Psoas muscle (tissue), 8 donors: ENCODE measurements at regions of chr11 and their contacts with region 1.

Region 1: DNA sequence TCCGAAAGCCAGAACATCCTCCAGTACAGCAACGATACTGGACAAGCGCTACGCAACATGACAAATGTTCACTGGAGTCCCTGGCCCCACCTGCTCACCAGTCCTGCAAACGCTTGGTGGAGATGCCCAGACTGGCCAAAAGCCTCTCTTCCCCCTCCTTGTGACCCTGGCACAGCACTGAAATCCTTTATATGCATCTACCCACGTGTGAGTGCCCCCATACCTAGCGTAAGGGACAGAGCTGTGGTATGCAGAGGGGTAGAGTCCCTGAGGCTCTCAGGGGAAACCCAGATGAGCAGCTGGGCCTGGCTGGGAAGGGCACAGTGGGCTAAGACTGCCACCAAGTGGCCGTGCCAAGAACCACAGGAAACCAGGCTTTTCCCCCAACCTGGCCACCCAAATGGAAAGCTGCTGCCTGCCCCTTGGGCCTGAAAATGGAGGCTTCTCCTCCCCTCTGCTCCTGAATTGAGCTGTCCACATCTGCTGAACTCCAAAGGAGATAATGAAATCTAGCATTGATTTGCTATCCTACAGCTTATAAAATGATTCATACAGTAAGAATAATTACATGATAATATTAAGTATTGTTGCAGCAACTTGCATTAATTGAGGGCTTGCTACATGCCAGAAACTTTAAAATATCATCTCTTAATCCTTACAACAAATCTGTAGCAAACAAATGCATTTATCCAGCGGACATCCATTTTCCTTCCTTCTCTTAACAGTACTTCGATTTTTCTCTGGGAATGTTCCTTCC is 24.8 kb upstream of the TTC12 start:
- DNase-seq: peak; percentile 53 to 77
- ATAC-seq: peak; percentile 86 to 94 (median 88)
- H3K4me3 ChIP-seq: no peak overlapping the region
- H3K27ac ChIP-seq: no peak overlapping the region
- H3K4me1 ChIP-seq: no peaks in the 10 kb centered on the region
- H3K27me3 ChIP-seq: peaks cover 0 to 4% (median 0%) of the 10 kb centered on the region in 3 donors
- CTCF ChIP-seq: peak; percentile 89

Region 2: DNA sequence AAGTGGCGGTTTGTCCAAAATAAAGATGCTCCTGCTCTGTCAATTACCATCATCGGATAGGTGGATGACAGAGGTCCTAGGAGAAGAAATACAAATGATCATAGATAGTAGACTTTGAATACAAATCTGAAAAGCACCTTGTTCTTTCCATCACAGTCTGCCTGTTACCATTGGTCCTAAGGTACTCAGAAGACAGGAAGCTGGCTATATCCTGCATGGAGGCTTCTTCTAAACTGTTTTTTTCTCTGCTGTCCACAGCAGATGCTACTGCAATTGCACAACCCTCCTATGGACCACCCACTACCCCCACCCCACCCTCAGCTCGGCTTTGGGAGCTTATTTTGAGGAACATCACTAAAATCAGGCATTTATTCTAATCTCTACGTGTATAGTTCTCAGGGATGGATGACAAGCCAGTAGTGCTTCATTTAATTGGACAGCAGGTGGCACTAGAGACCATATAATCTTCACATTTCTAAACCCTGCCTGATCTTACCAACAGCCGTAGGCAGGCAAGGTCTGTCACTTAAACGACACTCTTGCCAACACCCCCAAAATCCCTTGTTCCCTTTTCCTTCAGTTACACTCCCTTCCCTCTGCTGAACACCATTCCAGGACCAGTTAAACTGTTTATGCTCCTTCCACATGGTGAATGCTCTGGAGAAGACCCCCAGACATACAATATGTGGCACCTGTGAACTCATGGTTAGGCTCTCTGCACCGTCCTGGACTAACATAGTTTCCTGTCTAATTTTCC is 1070.0 kb before region 1 on chr11:
- intact Hi-C with region 1: loop called (anchors 5 to 10 kb)
- DNase-seq: no peak
- ATAC-seq: peak; percentile 93 to 98 (median 96)
- H3K4me3 ChIP-seq: no peak overlapping the region
- H3K27ac ChIP-seq: no peak overlapping the region
- H3K4me1 ChIP-seq: no peaks in the 10 kb centered on the region
- H3K27me3 ChIP-seq: no peaks in the 10 kb centered on the region
- CTCF ChIP-seq: peak; percentile 76

Region 3: GRCh38 chr11:112588252-112588694 is 701.3 kb before region 1 on chr11:
- intact Hi-C with region 1: loop called (anchors 1 to 5 kb)
- DNase-seq: peak; percentile 59 to 73
- ATAC-seq: peak; percentile 83 to 95 (median 89)
- H3K4me3 ChIP-seq: no peak overlapping the region
- H3K27ac ChIP-seq: no peak overlapping the region
- H3K4me1 ChIP-seq: no peaks in the 10 kb centered on the region
- H3K27me3 ChIP-seq: no peaks in the 10 kb centered on the region
- CTCF ChIP-seq: peak; percentile 84

Region 4: GRCh38 chr11:112795142-112795815 is 494.3 kb before region 1 on chr11:
- intact Hi-C with region 1: loop called (anchors 5 kb)
- DNase-seq: peak; percentile 55 to 67
- ATAC-seq: peak; percentile 72 to 86 (median 74)
- H3K4me3 ChIP-seq: no peak overlapping the region
- H3K27ac ChIP-seq: peak overlapping the region; percentile 47
- H3K4me1 ChIP-seq: no peaks in the 10 kb centered on the region
- H3K27me3 ChIP-seq: no peaks in the 10 kb centered on the region
- CTCF ChIP-seq: peak; percentile 65

Region 5: GRCh38 chr11:112961146-112961668 is 328.4 kb before region 1 on chr11 and contains the start of gene NCAM1:
- intact Hi-C with region 1: loop called in 1 of 2 experiments (anchors 10 kb)
- DNase-seq: peak; percentile 73 to 78
- ATAC-seq: peak; percentile 37 to 68 (median 62)
- H3K4me3 ChIP-seq: peak within 1 kb of the TSS; percentile 65
- H3K27ac ChIP-seq: no peak within 1 kb of the TSS
- H3K4me1 ChIP-seq: no peaks in the 10 kb centered on the region
- H3K27me3 ChIP-seq: peaks cover 0 to 68% (median 18%) of the 10 kb centered on the region in 3 donors
- CTCF ChIP-seq: no peak
- total RNA-seq, gene NCAM1: 3.0 to 50.3 (median 8.9) TPM

Region 6: DNA sequence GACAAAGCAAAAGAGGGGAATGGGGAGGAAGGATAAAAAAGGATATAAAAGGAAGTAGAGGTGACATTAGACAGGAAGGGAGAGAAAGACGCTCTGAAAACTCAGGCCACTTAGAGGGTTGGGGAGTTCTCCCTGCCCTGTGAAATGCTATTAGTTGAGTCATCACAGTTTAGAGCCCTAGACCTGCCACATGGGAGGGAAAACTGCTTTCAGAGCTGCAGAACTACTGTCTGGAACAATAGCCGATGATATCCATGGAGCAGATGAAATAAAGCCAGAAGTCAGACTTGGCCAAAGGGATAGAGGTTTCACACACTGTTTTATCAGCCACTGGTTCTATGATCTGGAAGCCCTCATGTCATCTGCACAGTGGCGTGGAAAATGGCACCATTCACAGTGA is 170.5 kb before region 1 on chr11:
- intact Hi-C with region 1: loop called in 1 of 2 experiments (anchors 5 kb)
- DNase-seq: no peak
- ATAC-seq: peak in 3 of 4 donors; percentile 27 to 38 (median 34)
- H3K4me3 ChIP-seq: no peak overlapping the region
- H3K27ac ChIP-seq: no peak overlapping the region
- H3K4me1 ChIP-seq: no peaks in the 10 kb centered on the region
- H3K27me3 ChIP-seq: no peaks in the 10 kb centered on the region
- CTCF ChIP-seq: no peak

Region 7: DNA sequence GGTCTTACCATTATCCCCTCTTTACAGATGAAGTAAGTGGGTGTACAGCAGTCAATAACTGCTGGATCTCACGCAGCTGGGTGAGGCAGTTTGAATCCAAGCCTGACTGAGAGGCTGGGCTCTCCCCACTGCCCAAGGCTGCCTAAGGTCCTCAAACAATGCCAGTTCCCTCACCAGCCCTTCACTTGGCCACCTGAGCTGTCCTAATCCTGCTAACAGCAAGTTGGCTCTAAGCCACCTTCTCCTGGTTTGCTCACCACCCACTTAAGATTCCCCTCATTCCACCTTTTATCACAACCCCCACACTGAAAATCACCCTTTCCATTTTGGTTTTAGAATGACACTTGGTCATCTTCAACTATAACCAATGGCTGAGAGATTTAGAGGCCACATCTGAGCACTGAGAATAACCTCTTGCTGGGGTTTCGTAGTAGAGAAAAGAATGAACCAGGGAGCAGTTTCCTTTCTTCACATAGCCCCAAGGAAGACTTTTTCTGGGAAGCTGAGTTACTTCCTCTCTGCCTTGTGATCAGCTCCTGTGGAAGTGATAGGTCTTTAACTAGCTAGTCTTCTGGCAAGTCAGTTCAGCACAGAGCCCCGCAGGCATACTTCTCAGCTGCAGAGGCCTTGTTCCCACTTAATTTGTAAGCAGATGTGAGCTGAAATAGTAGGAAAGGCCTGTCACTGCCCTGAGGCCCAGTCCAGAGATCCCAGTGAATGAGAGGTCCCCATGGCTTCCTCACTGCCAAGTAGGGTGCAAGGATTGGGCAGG is 33.0 kb before region 1 on chr11:
- intact Hi-C with region 1: no loop called
- DNase-seq: no peak
- ATAC-seq: no peak
- H3K4me3 ChIP-seq: no peak overlapping the region
- H3K27ac ChIP-seq: no peak overlapping the region
- H3K4me1 ChIP-seq: no peaks in the 10 kb centered on the region
- H3K27me3 ChIP-seq: no peaks in the 10 kb centered on the region
- CTCF ChIP-seq: no peak

Region 8: DNA sequence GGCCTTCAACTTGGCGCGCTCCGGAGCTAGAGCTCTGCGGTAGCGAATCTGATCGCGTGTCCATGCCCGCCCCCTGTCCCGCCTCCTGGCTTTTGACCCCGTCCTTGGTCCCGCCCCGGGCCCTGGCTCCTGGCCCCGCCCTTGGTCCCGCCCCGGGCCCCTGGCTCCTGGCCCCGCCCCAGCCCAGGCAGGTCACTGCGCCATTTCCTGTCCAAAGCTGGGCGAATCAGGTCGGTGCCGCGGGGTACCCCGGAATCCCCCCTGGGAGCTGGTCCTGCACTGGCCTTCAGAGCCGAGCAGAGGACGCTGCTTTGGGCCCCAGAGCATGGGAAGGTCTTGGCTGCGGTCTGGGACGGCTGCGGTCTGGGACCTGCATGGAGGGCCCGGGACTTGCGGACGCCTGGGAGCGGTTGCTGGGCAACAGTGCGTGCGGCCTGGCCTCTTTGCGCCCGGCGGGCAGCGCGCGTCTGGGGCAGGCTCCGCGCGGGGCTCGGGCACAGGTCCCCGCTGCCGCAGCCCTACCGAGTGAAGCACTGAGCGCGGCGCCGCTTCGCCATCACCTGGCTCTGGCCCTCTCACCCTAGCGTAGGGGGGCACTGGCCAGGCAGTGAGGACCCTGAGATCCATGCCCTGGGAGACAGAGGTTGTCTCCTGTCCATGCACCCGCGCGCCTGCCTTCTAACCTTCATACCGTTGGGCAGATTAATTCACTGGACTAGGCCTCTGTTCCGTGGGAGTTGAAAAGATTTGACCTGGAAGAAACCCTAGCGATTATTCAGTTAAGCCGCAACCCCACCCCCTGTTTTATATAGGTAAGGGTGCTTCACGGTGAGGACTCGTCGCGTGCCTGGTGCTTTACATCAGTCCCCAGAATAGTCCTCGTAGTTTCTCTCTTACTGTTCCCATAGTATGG is 25.0 kb after region 1 on chr11 and contains the start of gene TTC12:
- intact Hi-C with region 1: no loop called
- DNase-seq: peak; percentile 94 to 98
- ATAC-seq: peak; percentile 100
- H3K4me3 ChIP-seq: peak within 1 kb of the TSS; percentile 91
- H3K27ac ChIP-seq: peak within 1 kb of the TSS; percentile 91
- H3K4me1 ChIP-seq: peaks cover 18% of the 10 kb centered on the region
- H3K27me3 ChIP-seq: no peaks in the 10 kb centered on the region
- CTCF ChIP-seq: no peak
- total RNA-seq, gene TTC12: 3.2 to 7.7 (median 6.0) TPM